ENCODE measurements at regions of chr17 and their contacts with region 1.

Region 1: DNA sequence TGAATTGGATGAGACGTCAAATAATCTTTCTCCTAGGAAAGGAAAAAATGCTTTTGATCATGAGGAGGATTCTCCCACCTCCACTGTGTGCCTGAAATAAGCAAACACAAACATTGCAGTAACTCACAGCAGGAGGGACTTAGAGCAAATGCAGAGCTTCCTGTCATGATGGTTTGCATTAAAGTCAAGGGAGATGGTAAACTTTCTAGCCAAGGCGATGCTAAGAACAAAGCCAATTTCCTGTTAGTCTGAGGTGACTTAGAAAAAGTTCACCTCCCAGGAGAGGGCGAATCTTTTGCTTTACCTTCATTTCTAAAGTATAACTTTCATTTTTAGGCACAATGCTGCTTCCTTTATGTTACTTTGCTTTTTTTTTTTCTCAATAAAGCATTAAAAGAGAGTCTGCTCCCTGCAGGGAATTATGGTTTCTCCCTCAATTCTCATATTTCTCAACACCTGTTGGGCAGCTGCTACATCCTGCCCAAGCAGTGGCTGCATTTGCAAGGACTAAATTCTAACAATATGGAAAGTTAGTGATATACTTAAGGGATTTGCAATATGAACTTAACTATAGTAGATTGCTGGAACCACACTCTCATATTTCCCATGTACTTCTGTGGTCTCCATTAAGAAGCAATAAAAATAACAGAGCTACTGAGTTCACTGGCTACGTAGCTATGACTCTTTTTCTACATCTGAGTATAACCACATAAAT is 175.6 kb downstream of the PCTP start:
- DNase-seq: no peak
- H3K4me3 ChIP-seq: no peak overlapping the region
- H3K27ac ChIP-seq: no peak overlapping the region
- H3K4me1 ChIP-seq: no peaks in the 10 kb centered on the region
- H3K27me3 ChIP-seq: no peaks in the 10 kb centered on the region
- CTCF ChIP-seq: no peak
- POLR2A ChIP-seq: no peak

Region 2: GRCh38 chr17:53979991-53980390 is 1946.4 kb before region 1 on chr17:
- intact Hi-C with region 1: loop called (anchors 10 kb)
- DNase-seq: no peak
- H3K4me3 ChIP-seq: no peak overlapping the region
- H3K27ac ChIP-seq: no peak overlapping the region
- H3K4me1 ChIP-seq: no peaks in the 10 kb centered on the region
- H3K27me3 ChIP-seq: no peaks in the 10 kb centered on the region
- CTCF ChIP-seq: no peak
- POLR2A ChIP-seq: no peak

Region 3: DNA sequence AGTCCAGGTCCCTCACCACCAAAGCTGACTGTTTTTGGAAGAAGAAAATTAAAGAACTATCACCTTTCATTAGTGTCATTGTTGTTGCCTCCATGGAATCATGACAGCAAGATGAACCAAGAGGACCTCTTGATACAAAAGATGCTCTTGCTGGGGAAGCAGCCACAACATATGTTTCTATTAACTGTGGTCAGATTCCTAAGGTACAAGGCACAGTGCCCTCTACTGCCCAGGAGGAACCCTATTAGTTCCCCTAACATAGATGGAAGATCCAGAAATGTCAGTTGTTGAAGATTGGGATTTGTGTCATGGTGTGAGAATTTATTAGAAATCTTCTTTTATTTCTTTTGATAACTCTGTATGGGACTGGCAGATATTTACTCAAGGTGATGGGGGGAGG is 38.6 kb after region 1 on chr17:
- intact Hi-C with region 1: no loop called
- DNase-seq: no peak
- H3K4me3 ChIP-seq: no peak overlapping the region
- H3K27ac ChIP-seq: no peak overlapping the region
- H3K4me1 ChIP-seq: no peaks in the 10 kb centered on the region
- H3K27me3 ChIP-seq: no peaks in the 10 kb centered on the region
- CTCF ChIP-seq: no peak
- POLR2A ChIP-seq: no peak

Region 4: GRCh38 chr17:55990332-55991006 is 64.0 kb after region 1 on chr17:
- intact Hi-C with region 1: no loop called
- DNase-seq: no peak
- H3K4me3 ChIP-seq: no peak overlapping the region
- H3K27ac ChIP-seq: no peak overlapping the region
- H3K4me1 ChIP-seq: no peaks in the 10 kb centered on the region
- H3K27me3 ChIP-seq: no peaks in the 10 kb centered on the region
- CTCF ChIP-seq: no peak
- POLR2A ChIP-seq: no peak